ENCODE measurements at regions of chr13 and their contacts with region 1.

Region 1: DNA sequence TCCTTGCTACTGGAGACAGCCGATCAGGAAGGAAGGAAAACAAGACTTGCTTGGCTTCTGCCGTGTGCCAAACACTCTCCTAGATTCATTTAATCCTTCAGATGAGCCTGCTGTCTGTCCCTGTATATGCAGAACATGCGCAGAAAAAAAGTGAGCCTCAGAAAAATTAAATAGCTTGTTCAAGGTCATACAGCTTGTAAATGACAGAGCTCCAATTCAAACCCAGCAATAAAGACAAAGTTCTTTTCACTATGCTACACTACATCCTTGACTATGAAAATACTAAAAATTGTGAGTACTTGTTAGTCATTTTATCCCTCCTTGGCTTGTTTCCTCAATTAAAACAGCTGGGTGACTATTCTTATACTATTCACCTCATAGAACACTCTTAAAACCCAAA is 121.4 kb downstream of the KCNRG start:
- DNase-seq: no peak
- ATAC-seq: no peak
- H3K4me3 Mint-ChIP-seq: no peak overlapping the region
- H3K27ac Mint-ChIP-seq: no peak overlapping the region
- H3K4me1 Mint-ChIP-seq: peaks cover 13% of the 10 kb centered on the region
- H3K27me3 Mint-ChIP-seq: peaks cover 15% of the 10 kb centered on the region
- CTCF ChIP-seq: no peak

Region 2: DNA sequence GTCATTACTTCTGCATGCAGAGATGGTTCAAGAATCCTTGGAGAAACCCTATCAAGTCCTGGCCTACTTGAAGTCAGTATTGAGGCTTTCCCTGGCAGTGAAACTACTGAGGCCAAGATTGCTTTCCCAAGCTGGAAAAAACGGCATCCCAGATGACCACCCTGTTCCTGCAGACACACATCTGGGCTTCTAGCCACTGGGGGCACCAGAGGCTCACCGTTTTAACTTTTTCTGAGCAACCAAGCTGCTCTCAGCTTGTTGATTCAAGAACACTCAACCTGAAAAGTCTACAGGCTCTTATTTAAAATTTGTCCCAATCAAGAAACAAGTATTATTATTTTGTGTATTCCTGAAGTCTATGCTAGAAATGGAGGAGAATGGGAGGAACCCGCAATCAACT is 267.2 kb before region 1 on chr13:
- CTCF ChIA-PET with region 1: no interaction called
- POLR2A ChIA-PET with region 1: no interaction called
- intact Hi-C with region 1: no loop called
- DNase-seq: no peak
- ATAC-seq: no peak
- H3K4me3 Mint-ChIP-seq: no peak overlapping the region
- H3K27ac Mint-ChIP-seq: no peak overlapping the region
- H3K4me1 Mint-ChIP-seq: no peaks in the 10 kb centered on the region
- H3K27me3 Mint-ChIP-seq: peaks cover 3% of the 10 kb centered on the region
- CTCF ChIP-seq: no peak

Region 3: GRCh38 chr13:50167224-50167947 is 30.7 kb after region 1 on chr13:
- CTCF ChIA-PET with region 1: no interaction called
- POLR2A ChIA-PET with region 1: interaction called, 31 read pairs
- intact Hi-C with region 1: no loop called
- DNase-seq: no peak
- ATAC-seq: peak; percentile 87
- H3K4me3 Mint-ChIP-seq: no peak overlapping the region
- H3K27ac Mint-ChIP-seq: peak overlapping the region; percentile 66
- H3K4me1 Mint-ChIP-seq: peaks cover 12% of the 10 kb centered on the region
- H3K27me3 Mint-ChIP-seq: no peaks in the 10 kb centered on the region
- CTCF ChIP-seq: no peak

Measured in activated B cell treated with CpG ODN at 0.5 μM for 24 hours (primary cell).